Right lobe of liver (tissue), 6 donors: ENCODE measurements at regions of chr2 and their contacts with region 1.

Region 1: GRCh38 chr2:177332041-177332991 is 60.3 kb upstream of the AGPS start:
- DNase-seq: peak in 2 of 3 donors; percentile 24 to 53
- ATAC-seq: peak; percentile 86 to 89 (median 88)
- H3K4me3 ChIP-seq: no peak overlapping the region
- H3K27ac ChIP-seq: peak overlapping the region in 2 of 3 donors; percentile 39 to 41
- H3K4me1 ChIP-seq: peaks cover 0 to 9% (median 0%) of the 10 kb centered on the region in 4 donors
- H3K27me3 ChIP-seq: no peaks in the 10 kb centered on the region
- CTCF ChIP-seq: peak; percentile 59 to 68 (median 64)
- POLR2A ChIP-seq: no peak

Region 2: GRCh38 chr2:176508984-176509740 is 823.2 kb before region 1 on chr2:
- intact Hi-C with region 1: no loop called
- DNase-seq: no peak
- ATAC-seq: no peak
- H3K4me3 ChIP-seq: no peak overlapping the region
- H3K27ac ChIP-seq: no peak overlapping the region
- H3K4me1 ChIP-seq: no peaks in the 10 kb centered on the region
- H3K27me3 ChIP-seq: no peaks in the 10 kb centered on the region
- CTCF ChIP-seq: no peak
- POLR2A ChIP-seq: no peak

Region 3: GRCh38 chr2:177164584-177165052 is 167.7 kb before region 1 on chr2:
- intact Hi-C with region 1: loop called in 1 of 2 experiments (anchors 5 kb)
- DNase-seq: peak; percentile 80 to 85 (median 80)
- ATAC-seq: peak; percentile 85 to 92 (median 90)
- H3K4me3 ChIP-seq: peak overlapping the region; percentile 14 to 43 (median 42)
- H3K27ac ChIP-seq: peak overlapping the region; percentile 87 to 91 (median 88)
- H3K4me1 ChIP-seq: peaks cover 0 to 16% (median 4%) of the 10 kb centered on the region in 4 donors
- H3K27me3 ChIP-seq: no peaks in the 10 kb centered on the region
- CTCF ChIP-seq: peak in 3 of 4 donors; percentile 99 to 100 (median 99)
- POLR2A ChIP-seq: no peak

Region 4: GRCh38 chr2:177263451-177264208 is 68.7 kb before region 1 on chr2:
- intact Hi-C with region 1: loop called in 1 of 2 experiments (anchors 5 kb)
- DNase-seq: peak; percentile 98 to 99 (median 99)
- ATAC-seq: peak; percentile 70 to 85 (median 79)
- H3K4me3 ChIP-seq: peak overlapping the region; percentile 72 to 90 (median 82)
- H3K27ac ChIP-seq: peak overlapping the region; percentile 98 to 100 (median 100)
- H3K4me1 ChIP-seq: peaks cover 0 to 43% (median 14%) of the 10 kb centered on the region in 4 donors
- H3K27me3 ChIP-seq: no peaks in the 10 kb centered on the region
- CTCF ChIP-seq: peak; percentile 84 to 93 (median 88)
- POLR2A ChIP-seq: peak; percentile 86

Region 5: DNA sequence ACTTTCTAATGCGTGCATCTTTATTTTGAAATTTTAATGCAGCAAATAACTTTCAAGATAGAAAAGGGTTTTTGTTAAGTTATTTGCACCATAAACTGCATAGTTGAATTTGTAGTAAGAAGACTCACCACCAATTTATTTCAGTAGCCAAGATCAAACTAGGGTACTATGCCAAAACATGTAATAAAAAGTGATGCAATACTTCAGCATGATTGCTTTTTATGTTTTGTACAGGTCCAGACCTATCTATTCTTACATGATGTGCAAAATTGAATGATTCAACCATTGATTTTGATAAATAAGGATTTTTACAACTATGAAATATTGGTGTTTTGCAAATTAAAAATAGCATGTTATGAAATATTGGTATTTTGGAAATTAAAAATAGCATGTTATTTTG is 87.0 kb after region 1 on chr2:
- intact Hi-C with region 1: loop called in 1 of 2 experiments (anchors 10 kb)
- DNase-seq: no peak
- ATAC-seq: peak in 3 of 4 donors; percentile 73 to 78 (median 73)
- H3K4me3 ChIP-seq: no peak overlapping the region
- H3K27ac ChIP-seq: no peak overlapping the region
- H3K4me1 ChIP-seq: peaks cover 0 to 31% (median 8%) of the 10 kb centered on the region in 4 donors
- H3K27me3 ChIP-seq: no peaks in the 10 kb centered on the region
- CTCF ChIP-seq: no peak
- POLR2A ChIP-seq: no peak

Region 6: GRCh38 chr2:177585234-177585863 is 253.0 kb after region 1 on chr2:
- intact Hi-C with region 1: no loop called
- DNase-seq: peak; percentile 33 to 76 (median 62)
- ATAC-seq: peak; percentile 84 to 96 (median 92)
- H3K4me3 ChIP-seq: no peak overlapping the region
- H3K27ac ChIP-seq: no peak overlapping the region
- H3K4me1 ChIP-seq: peaks cover 0 to 3% (median 0%) of the 10 kb centered on the region in 4 donors
- H3K27me3 ChIP-seq: no peaks in the 10 kb centered on the region
- CTCF ChIP-seq: no peak
- POLR2A ChIP-seq: no peak

Region 7: DNA sequence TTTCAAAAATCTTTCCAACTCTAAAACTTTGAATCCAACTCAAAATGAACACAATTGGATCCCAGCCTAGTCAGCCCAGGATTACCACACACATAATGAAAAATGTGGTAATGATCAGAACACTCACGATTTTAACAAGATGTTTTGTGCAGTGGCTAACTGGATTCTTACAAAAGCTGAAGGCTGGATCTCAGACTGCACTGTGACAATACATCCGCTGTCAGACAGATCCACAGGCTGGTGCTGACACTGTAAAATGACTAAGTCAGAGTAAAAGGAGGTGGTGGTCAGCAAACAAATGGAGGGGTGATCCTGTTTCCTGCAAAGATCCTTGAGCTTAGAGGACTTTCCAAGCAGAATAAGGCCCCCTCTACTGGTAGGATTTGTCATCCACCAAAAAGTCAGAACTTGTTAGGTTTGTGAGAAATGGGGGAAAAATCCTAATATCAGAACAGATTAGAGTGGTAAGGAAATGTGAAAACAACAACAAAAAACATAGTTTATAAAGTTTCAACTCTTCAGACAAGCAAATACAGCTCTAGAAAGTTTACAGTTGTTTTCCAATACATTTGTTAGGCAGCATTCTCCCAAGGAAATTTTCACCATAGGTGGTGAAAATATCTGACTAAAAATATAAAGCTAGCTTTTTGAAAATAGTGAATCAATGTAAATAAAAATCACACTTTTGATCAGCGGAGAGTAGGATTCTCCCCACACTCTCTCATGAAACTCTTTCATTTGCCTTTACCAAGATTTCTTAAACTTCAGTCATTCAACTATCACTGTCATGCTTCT is 272.2 kb after region 1 on chr2:
- intact Hi-C with region 1: loop called in 1 of 2 experiments (anchors 10 kb)
- DNase-seq: no peak
- ATAC-seq: peak; percentile 72 to 88 (median 83)
- H3K4me3 ChIP-seq: no peak overlapping the region
- H3K27ac ChIP-seq: no peak overlapping the region
- H3K4me1 ChIP-seq: peaks cover 0 to 9% (median 0%) of the 10 kb centered on the region in 4 donors
- H3K27me3 ChIP-seq: no peaks in the 10 kb centered on the region
- CTCF ChIP-seq: peak; percentile 53 to 69 (median 63)
- POLR2A ChIP-seq: no peak